ENCODE measurements at regions of chr6 and their contacts with region 1.

Region 1: DNA sequence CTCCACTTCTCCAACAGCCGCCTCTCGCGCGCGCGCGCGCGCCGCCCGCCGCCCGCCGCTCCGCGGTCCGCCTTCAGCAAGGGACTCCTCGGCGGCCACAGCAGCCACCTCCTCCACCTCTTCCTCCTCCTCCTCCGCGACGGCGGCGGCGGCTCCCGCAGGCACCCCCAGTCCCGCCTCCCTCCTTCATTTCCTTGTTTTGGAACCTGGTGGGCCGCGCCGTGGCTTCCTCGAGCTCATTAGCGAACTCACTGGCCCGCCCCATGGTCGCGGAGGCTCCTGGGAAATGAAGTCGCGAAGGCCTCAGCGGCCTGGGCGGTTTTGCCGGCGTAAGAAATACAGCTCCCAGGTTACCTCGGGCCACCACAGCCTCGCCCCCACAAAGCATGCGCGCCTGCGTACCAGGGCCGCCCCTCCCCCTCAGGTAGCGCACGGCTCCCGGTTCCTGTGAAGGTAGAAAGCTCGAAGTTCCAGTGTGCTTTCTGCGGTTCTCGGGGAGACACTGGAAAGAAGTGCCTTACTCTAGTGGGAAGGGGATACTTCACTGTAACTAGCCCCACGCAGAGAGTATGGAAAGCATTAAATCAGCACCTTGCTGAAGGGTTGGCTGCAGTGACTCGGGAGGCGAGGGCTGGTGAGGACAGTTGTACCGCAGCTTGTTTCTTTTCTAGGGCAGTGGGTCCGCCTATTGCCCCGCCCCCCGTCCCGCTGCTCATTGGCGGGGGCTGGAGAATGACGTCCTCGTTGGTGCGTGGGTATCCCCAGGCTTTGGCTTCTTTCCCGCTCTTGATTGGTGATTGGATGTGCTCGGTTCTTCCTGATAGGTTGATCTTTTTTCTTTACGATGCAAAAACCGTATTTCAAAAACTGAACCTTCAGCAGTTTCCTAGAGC is at the start of gene CDK19:
- DNase-seq: peak; percentile 99
- H3K4me3 ChIP-seq: peak within 1 kb of the TSS; percentile 85 to 99 (median 93)
- H3K27ac ChIP-seq: peak within 1 kb of the TSS; percentile 94 to 98 (median 96)
- H3K4me1 ChIP-seq: peaks cover 14 to 20% (median 19%) of the 10 kb centered on the region in 4 donors
- H3K27me3 ChIP-seq: no peaks in the 10 kb centered on the region
- CTCF ChIP-seq: no peak
- EP300 ChIP-seq: no peak
- POLR2A ChIP-seq: peak; percentile 48
- total RNA-seq, gene CDK19: 12.0 to 15.0 (median 13.6) TPM

Region 2: DNA sequence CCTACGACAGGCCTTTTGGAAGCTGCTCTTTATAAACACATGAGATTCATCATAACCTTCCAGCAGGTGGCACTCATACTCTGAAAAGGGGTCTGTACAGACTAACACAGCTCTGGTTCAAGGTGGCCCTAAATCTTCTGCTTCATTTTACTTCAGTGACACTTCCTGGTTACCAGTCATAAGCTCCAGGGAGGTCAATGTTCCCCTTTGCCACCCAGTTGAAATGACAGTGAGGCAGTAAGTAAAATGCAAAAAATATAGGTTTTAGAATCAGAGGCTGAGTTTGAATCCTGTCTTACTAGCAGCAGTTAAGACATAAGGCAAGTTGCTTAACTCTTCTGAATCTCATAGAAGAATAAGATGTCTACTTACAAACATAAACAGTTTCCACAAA is 133.0 kb before region 1 on chr6:
- intact Hi-C with region 1: loop called (anchors 5 kb)
- DNase-seq: no peak
- H3K4me3 ChIP-seq: no peak overlapping the region
- H3K27ac ChIP-seq: no peak overlapping the region
- H3K4me1 ChIP-seq: peaks cover 0 to 10% (median 5%) of the 10 kb centered on the region in 4 donors
- H3K27me3 ChIP-seq: no peaks in the 10 kb centered on the region
- CTCF ChIP-seq: peak; percentile 65 to 73 (median 71)
- EP300 ChIP-seq: no peak
- POLR2A ChIP-seq: no peak

Region 3: GRCh38 chr6:110958329-110959192 is 143.1 kb after region 1 on chr6 and contains the start of gene GTF3C6:
- intact Hi-C with region 1: loop called (anchors 5 kb)
- DNase-seq: peak; percentile 97
- H3K4me3 ChIP-seq: peak within 1 kb of the TSS; percentile 79 to 85 (median 82)
- H3K27ac ChIP-seq: peak within 1 kb of the TSS; percentile 85 to 92 (median 85)
- H3K4me1 ChIP-seq: peaks cover 5 to 22% (median 19%) of the 10 kb centered on the region in 4 donors
- H3K27me3 ChIP-seq: no peaks in the 10 kb centered on the region
- CTCF ChIP-seq: no peak
- EP300 ChIP-seq: no peak
- POLR2A ChIP-seq: peak; percentile 22
- total RNA-seq, gene GTF3C6: 37.1 to 46.1 (median 42.6) TPM

Measured in esophagus muscularis mucosa (tissue), 4 donors.